Ovary (tissue), 10 donors: ENCODE measurements at regions of chr16 and their contacts with region 1.

Region 1: DNA sequence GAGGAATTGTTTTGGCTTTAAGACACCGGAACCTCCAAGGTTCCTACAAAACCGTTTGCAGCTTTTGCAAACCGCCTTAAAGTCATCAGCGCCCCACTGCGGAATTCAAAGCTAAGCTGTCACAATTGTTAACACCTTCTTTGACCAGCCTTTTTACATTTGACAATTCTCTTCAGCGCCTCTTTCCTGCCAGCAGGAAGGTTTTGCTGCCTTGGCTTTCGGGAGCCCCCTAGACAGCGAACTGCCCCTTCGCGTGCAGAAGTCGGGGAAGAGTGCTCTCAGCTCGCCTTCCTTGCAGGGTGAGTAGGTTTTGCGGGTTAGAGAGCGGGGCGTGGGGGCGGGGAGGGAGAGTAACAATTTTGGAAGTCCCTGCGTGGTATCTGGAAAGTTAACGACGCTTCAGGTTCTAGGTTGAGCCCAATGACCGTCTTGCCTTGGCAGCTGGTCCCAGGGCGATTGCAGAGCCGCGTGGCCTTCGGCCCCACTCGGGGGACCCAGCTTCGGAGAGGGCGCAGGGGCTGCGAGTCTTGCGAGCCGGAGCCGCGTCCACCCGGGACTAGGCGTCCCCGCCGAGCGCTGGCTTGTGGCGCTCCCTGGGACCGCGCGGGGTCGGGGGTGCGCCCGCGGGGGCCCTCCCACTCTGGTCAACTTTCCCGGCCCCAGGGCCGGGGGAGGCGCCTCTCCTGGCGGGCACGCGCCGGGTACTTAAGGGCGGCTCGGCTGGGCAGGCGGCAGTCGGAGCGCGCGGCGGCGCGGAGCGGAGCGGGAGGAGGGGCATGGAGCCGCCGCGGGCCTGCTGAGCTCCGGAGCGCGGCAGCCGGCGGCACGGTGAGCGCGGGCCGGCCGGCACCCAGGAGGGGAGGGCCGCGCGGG is at the start of gene HAS3:
- DNase-seq: peak in 3 of 5 donors; percentile 41 to 65 (median 51)
- H3K4me3 ChIP-seq: peak within 1 kb of the TSS; percentile 40
- H3K27ac ChIP-seq: no peak within 1 kb of the TSS
- H3K4me1 ChIP-seq: peaks cover 12% of the 10 kb centered on the region
- H3K27me3 ChIP-seq: no peaks in the 10 kb centered on the region
- CTCF ChIP-seq: no peak
- EP300 ChIP-seq: no peak
- POLR2A ChIP-seq: no peak
- total RNA-seq, gene HAS3: 0.83 to 3.2 (median 2.0) TPM

Region 2: DNA sequence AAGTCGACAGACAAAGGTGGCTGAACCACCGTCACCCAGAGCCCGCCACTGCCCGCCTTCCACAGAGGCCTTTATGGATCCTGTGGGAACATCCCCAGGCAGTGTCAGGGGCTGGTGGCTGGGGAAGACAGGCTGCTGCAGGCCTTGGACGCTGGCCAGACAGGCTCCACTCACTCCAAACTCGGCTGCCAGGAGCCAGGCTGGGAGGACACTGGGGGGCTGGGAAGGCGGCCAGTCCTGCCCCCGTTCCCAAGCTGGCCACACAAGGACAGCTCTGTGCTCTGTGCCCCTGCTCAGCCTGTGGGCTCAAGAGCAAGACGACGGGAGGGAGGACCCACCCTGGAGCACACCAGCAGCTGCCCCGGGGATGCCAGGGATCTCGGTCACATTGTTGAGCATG is 1154.2 kb before region 1 on chr16:
- intact Hi-C with region 1: no loop called
- DNase-seq: no peak
- H3K4me3 ChIP-seq: no peak overlapping the region
- H3K27ac ChIP-seq: no peak overlapping the region
- H3K4me1 ChIP-seq: no peaks in the 10 kb centered on the region
- H3K27me3 ChIP-seq: no peaks in the 10 kb centered on the region
- CTCF ChIP-seq: no peak
- EP300 ChIP-seq: no peak
- POLR2A ChIP-seq: no peak

Region 3: DNA sequence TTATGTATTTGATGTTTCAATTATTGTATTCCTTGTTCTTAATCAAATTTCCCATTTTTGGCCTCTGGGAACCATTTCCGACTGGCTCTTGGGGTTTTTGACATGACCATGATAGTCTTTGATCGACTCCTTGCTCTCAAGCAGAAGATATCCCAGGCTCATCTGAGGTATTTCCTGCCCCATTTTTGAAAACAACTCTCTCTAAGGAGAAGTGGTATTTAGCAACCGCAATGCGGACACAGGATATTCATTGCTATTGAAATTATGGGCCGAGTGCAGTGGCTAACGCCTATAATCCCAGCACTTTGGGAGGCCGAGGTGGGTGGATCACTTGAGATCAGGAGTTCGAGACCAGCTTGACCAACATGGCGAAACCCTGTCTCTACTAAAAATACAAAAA is 256.9 kb before region 1 on chr16:
- intact Hi-C with region 1: loop called in 1 of 4 experiments (anchors 5 kb)
- DNase-seq: no peak
- H3K4me3 ChIP-seq: no peak overlapping the region
- H3K27ac ChIP-seq: no peak overlapping the region
- H3K4me1 ChIP-seq: peaks cover 1% of the 10 kb centered on the region
- H3K27me3 ChIP-seq: no peaks in the 10 kb centered on the region
- CTCF ChIP-seq: no peak
- EP300 ChIP-seq: no peak
- POLR2A ChIP-seq: no peak

Region 4: GRCh38 chr16:68972720-68973119 is 133.0 kb before region 1 on chr16:
- intact Hi-C with region 1: loop called in 1 of 4 experiments (anchors 10 kb)
- DNase-seq: no peak
- H3K4me3 ChIP-seq: no peak overlapping the region
- H3K27ac ChIP-seq: no peak overlapping the region
- H3K4me1 ChIP-seq: no peaks in the 10 kb centered on the region
- H3K27me3 ChIP-seq: no peaks in the 10 kb centered on the region
- CTCF ChIP-seq: no peak
- EP300 ChIP-seq: no peak
- POLR2A ChIP-seq: no peak

Region 5: GRCh38 chr16:69049146-69049545 is 56.6 kb before region 1 on chr16:
- intact Hi-C with region 1: no loop called
- DNase-seq: no peak
- H3K4me3 ChIP-seq: no peak overlapping the region
- H3K27ac ChIP-seq: no peak overlapping the region
- H3K4me1 ChIP-seq: no peaks in the 10 kb centered on the region
- H3K27me3 ChIP-seq: no peaks in the 10 kb centered on the region
- CTCF ChIP-seq: no peak
- EP300 ChIP-seq: no peak
- POLR2A ChIP-seq: no peak